HepG2 (cell line): ENCODE measurements at regions of chr2 and their contacts with region 1.

Region 1: DNA sequence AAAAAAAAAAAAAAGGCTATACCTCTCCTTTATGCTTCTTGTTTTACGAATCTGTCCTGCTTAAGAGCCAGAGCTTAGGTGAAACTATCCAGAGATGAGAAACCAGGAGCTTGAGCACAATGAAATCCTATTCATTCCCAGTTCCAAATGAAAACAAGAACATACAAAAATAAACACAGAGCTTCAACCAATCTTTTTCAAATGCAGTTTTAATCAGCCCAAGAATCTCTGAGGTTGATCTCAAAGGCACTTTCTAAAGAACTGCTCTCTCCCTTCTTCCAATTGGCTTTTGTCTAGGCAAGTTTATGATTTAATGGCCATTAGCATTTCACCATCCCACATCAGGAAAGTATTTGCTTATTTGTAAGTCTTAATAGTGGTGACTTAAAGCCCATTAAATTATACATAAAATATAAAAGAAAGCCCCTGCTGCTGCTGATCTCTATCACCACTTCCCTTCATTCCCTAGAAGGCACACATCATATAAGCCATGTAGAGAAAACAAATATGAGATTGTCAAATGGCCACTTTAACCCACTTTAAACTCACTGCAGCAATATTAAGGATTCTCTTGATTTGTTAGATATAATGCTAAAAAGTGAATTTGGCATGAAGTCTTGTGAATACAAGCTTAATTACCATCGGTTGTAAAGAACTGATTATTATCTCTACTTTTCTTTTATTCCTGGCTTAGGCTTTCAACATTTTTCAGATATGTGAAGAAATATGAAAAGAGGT is 29.3 kb upstream of the SCN9A start:
- DNase-seq: no peak
- ATAC-seq: no peak
- H3K4me3 ChIP-seq: no peak overlapping the region
- H3K27ac ChIP-seq: no peak overlapping the region
- H3K4me1 ChIP-seq: no peaks in the 10 kb centered on the region
- H3K27me3 ChIP-seq: no peaks in the 10 kb centered on the region
- CTCF ChIP-seq: no peak
- EP300 ChIP-seq: no peak
- POLR2A ChIP-seq: no peak
- RAD21 ChIP-seq: no peak

Region 2: GRCh38 chr2:165173215-165173614 is 1231.8 kb before region 1 on chr2:
- CTCF ChIA-PET with region 1: no interaction called
- POLR2A ChIA-PET with region 1: no interaction called
- in situ Hi-C with region 1: no loop called
- intact Hi-C with region 1: no loop called
- DNase-seq: no peak
- ATAC-seq: no peak
- H3K4me3 ChIP-seq: no peak overlapping the region
- H3K27ac ChIP-seq: no peak overlapping the region
- H3K4me1 ChIP-seq: no peaks in the 10 kb centered on the region
- H3K27me3 ChIP-seq: 0 out of 5 replicates have a peak, but pooled peaks cover 0 to 3% of the 10 kb centered on the region in 2 experiments
- CTCF ChIP-seq: no peak
- EP300 ChIP-seq: no peak
- POLR2A ChIP-seq: no peak
- RAD21 ChIP-seq: no peak

Region 3: GRCh38 chr2:166384774-166385173 is 20.2 kb before region 1 on chr2:
- CTCF ChIA-PET with region 1: no interaction called
- POLR2A ChIA-PET with region 1: no interaction called
- in situ Hi-C with region 1: no loop called
- intact Hi-C with region 1: loop called (anchors 2 kb)
- DNase-seq: peak; percentile 27
- ATAC-seq: no peak; the same call in 1 of the 3 replicates
- H3K4me3 ChIP-seq: no peak overlapping the region; a peak in 1 of 6 replicates
- H3K27ac ChIP-seq: no peak overlapping the region
- H3K4me1 ChIP-seq: peaks cover 7% of the 10 kb centered on the region
- H3K27me3 ChIP-seq: no peaks in the 10 kb centered on the region; a peak in 1 of 5 replicates
- CTCF ChIP-seq: peak; percentile 68
- EP300 ChIP-seq: no peak
- POLR2A ChIP-seq: no peak
- RAD21 ChIP-seq: no peak